Dorsolateral prefrontal cortex (tissue), 120 donors: ENCODE measurements at regions of chr16 and their contacts with region 1.

Region 1: DNA sequence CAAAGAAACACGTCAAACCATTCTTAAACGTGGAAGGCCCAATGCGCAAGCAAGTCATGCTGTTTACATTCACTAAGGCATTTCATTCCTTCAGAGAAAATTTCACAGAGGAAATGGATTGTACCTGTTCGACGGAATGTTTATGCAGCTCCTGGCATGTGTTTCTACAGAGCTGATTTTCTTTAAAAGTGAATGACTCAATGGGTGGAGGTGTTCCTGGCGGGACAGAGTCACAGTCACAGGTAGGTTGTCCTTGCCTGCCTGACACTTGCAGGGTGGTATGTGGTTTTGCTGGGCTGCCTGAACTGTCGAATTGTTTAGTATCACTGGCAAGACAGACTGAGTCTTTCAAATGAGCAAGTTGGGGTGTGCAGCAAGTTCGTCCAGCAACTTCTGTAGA is 11.6 kb downstream of the PALB2 start:
- DNase-seq: no peak
- H3K4me3 ChIP-seq: no peak overlapping the region
- H3K27ac ChIP-seq: no peak overlapping the region
- H3K27me3 ChIP-seq: no peaks in the 10 kb centered on the region
- CTCF ChIP-seq: no peak

Region 2: DNA sequence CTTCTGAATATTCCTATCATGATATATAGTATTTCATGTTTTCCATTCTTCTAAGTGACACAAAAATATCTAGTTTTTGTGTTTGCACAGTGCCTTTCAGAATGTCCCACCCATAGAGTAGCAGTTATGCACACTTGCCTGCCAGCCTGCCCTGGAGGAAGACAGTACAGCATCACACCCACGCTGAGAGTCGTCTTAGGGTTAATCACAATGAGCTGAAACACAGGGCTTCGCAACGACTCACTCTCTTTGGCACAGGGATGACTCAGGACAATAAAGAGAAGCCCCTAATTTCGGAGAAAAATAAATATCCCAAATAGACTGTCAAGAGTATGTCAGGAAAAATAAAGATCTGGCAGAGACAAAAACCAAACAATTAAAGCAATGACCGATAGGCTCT is 21.8 kb before region 1 on chr16:
- intact Hi-C with region 1: loop called in 1 of 2 experiments (anchors 2 kb)
- DNase-seq: no peak
- H3K4me3 ChIP-seq: no peak overlapping the region
- H3K27ac ChIP-seq: no peak overlapping the region
- H3K27me3 ChIP-seq: no peaks in the 10 kb centered on the region
- CTCF ChIP-seq: no peak